Left cardiac atrium (tissue), 4 donors: ENCODE measurements at regions of chr7 and their contacts with region 1.

Region 1: DNA sequence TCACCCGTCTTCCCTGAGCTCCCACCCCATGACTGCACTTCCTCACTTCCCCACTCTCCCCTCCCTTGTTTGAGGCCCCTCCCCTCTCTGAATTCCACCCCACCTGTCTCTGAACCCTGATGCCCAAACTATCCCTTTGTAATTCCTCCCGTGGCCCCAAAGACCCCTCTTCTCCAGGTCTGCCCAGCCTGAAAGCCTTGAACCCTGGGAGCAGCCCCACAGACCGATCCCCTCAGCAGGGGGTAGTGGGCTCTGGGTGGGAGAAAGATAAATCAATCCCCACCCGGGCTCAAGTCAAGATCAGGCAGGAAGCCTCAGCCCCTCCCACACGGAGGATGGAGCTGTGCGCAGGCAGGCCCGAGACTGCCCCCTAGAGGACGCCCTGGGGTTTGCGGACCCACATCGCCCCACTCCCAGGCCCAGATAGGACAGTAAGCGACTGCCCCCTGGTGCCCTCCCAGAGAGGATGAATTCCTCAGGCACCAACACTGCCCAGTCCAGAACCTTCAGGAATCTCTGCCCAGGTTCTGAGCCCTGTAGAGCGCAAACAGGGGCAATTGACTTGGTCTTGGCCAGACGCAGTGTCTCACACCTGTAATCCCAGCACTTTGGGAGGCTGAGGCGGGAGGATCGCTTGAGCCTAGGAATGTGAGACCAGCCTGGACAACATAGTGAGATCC is 11.7 kb downstream of the HSPB1 start:
- DNase-seq: peak; percentile 97
- ATAC-seq: peak; percentile 58 to 62

Region 2: DNA sequence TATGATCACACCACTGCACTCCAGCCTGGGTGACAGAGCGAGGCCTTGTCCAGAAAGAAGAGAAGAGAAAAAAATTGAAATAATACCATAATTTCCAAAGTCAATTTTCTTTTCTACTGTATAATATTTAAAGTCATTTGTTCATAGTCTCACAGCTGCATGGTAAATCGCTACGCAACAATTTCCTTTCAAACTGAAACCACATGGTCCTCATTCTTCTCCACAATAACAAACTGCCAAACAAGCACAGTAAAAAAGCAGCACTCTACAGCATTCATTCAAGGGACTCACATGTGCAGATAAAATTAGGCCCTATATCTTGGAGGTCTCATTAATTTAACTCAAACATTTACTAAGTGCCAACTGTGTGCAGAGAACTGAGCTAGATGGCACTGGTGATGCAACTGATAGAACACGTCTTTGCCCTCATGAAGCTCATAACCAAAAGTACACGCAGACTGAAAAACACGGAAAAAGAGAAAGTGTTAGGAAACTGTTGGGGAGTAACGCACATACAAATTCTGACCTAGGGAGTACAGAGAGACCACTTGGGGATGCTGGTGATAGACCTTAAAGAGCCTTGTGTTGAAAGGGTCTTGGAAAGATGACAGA is 180.9 kb before region 1 on chr7:
- intact Hi-C with region 1: no loop called
- DNase-seq: no peak
- ATAC-seq: no peak

Region 3: GRCh38 chr7:76179686-76180085 is 134.5 kb before region 1 on chr7:
- intact Hi-C with region 1: loop called in 1 of 2 experiments (anchors 1 kb)
- DNase-seq: no peak
- ATAC-seq: no peak

Region 4: GRCh38 chr7:76291343-76292212 is 22.6 kb before region 1 on chr7:
- intact Hi-C with region 1: loop called (anchors 1 kb)
- DNase-seq: peak; percentile 93
- ATAC-seq: peak; percentile 71 to 76

Region 5: DNA sequence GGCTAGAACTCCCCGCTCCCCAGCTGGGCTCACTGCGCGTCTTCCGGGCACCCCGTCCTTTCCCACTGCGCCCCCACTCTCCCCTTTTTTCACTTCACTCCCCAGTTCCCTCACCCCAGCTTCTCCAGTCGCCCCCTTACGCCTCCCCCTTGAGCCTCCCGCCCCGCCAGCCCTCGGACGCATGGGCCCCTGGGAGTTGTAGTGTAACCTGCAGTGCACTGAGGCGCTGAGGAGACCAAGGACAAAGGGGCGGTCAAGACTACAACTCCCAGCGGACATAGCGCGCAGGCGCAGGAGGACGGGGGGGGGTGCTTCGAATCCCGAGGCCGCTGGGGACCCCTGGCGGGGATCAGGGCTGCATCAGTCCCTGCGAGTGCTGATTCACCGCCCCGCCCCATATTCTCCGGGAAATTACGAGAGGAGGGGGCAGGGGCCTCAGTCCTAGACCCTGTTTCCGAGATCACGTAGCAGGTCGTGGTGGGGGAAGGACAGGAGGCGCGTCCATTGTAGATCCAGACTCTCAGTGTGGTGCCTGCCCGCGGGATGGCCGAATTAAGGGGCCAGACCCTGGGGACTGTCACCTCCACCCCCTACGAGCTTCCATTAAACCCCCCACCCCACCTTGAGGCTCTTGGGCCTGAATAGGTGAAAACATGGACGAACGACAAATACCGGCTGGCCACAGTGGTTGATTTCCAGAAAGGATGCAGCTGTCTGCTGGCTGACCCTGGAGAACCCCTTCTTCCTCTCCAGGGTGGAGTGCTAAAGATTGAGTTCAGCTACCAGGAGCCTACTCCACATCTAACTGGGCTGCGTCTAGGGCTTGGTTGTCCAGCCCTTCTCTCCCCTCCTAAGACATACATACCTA is 45.2 kb after region 1 on chr7:
- intact Hi-C with region 1: loop called (anchors 2 kb)
- DNase-seq: peak; percentile 97
- ATAC-seq: peak; percentile 95 to 97